Testis (tissue), 5 donors: ENCODE measurements at regions of chr1 and their contacts with region 1.

Region 1: GRCh38 chr1:71521655-71522264 is 440.9 kb upstream of the ZRANB2 start:
- DNase-seq: peak; percentile 81
- H3K4me3 ChIP-seq: no peak overlapping the region
- H3K27ac ChIP-seq: no peak overlapping the region
- H3K4me1 ChIP-seq: no peaks in the 10 kb centered on the region
- H3K27me3 ChIP-seq: no peaks in the 10 kb centered on the region
- CTCF ChIP-seq: peak; percentile 54 to 64 (median 57)
- POLR2A ChIP-seq: no peak

Region 2: DNA sequence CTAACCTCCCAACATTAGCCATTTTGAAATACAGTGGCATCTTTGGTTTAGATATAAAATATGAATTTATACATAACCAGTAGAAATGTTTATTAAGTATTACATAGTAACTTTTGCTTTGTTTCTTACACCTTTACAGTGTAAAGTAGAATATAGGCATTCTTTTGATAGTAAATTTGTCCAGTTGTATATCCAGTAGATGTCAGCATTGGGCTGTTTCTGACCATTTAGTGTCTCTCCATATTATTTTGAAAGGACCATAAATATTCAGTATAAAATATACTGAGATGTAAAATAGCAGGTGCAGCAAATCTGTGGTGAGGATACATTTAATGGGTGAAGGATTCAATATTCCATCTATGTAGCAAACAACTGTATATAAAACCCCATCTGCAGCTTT is 325.1 kb before region 1 on chr1:
- intact Hi-C with region 1: loop called (anchors 10 kb)
- DNase-seq: no peak
- H3K4me3 ChIP-seq: no peak overlapping the region
- H3K27ac ChIP-seq: no peak overlapping the region
- H3K4me1 ChIP-seq: peaks cover 19% of the 10 kb centered on the region
- H3K27me3 ChIP-seq: no peaks in the 10 kb centered on the region
- CTCF ChIP-seq: peak in 2 of 3 experiments; percentile 8 to 17
- POLR2A ChIP-seq: no peak

Region 3: DNA sequence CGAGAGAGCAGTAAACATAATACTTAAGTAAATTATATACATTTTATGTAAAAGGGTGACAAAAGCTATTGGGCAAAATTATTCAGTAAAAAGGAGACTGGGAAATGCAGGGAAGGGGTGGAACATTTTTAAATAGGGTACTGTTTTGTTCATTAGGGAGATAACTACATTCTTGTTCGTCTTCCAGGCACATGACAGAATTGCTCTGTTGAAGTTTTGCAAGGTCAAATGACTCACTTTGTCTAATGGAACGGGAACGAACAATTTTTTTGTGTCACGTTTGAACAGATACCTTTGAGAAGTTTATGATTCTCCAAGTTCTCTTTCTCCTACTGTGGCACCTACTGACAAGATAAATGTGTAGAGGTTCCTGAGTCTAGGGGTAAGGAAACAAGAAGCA is 58.6 kb before region 1 on chr1:
- intact Hi-C with region 1: no loop called
- DNase-seq: peak; percentile 24
- H3K4me3 ChIP-seq: no peak overlapping the region
- H3K27ac ChIP-seq: no peak overlapping the region
- H3K4me1 ChIP-seq: peaks cover 16% of the 10 kb centered on the region
- H3K27me3 ChIP-seq: no peaks in the 10 kb centered on the region
- CTCF ChIP-seq: no peak
- POLR2A ChIP-seq: no peak

Region 4: DNA sequence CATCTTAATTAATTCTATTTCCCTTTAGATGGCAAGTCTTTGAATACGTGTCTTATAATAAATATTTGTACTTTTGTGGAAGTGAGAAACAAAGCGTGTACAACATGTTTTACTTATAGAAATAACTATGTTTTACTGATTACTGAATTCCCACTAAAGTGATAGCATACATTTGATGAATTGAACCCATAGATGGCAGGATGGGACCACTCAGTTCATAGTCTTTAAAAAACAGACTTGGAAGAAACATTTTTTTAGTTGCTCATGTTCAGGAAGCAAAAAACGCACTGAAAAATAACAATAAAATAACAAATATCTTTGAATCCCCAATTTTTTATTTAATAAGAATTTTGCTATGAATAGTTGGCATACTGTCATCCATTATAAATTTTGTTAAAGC is 66.2 kb after region 1 on chr1:
- intact Hi-C with region 1: no loop called
- DNase-seq: no peak
- H3K4me3 ChIP-seq: no peak overlapping the region
- H3K27ac ChIP-seq: no peak overlapping the region
- H3K4me1 ChIP-seq: no peaks in the 10 kb centered on the region
- H3K27me3 ChIP-seq: no peaks in the 10 kb centered on the region
- CTCF ChIP-seq: no peak
- POLR2A ChIP-seq: no peak

Region 5: DNA sequence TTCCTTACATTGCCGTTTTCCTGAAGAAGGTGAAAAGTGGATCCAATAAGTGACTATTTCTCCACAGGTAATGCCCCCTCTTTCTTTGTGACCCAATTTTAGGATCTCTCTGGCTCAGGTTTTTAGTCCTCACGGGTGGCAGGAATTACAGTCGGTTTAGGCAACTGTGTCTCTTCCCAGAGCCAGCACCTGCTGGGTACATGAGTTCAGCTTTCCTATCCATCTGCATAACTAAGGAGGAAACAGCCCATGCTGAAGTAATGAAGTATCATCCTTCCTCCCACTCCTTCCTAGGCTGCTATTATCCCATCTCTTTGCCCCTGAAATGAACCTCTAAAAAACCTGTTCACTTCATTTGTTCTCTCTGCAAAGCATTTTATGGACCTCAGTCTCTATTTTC is 216.0 kb after region 1 on chr1:
- intact Hi-C with region 1: no loop called
- DNase-seq: no peak
- H3K4me3 ChIP-seq: no peak overlapping the region
- H3K27ac ChIP-seq: no peak overlapping the region
- H3K4me1 ChIP-seq: no peaks in the 10 kb centered on the region
- H3K27me3 ChIP-seq: no peaks in the 10 kb centered on the region
- CTCF ChIP-seq: no peak
- POLR2A ChIP-seq: no peak